ENCODE measurements at regions of chr4 and their contacts with region 1.

Region 1: GRCh38 chr4:53840643-53841042 is 223.8 kb downstream of the CHIC2 start:
- DNase-seq: peak; percentile 40
- ATAC-seq: no peak
- H3K4me3 ChIP-seq: no peak overlapping the region
- H3K27ac ChIP-seq: no peak overlapping the region
- H3K4me1 ChIP-seq: no peaks in the 10 kb centered on the region
- H3K27me3 ChIP-seq: no peaks in the 10 kb centered on the region
- CTCF ChIP-seq: no peak

Region 2: GRCh38 chr4:53605783-53606182 is 234.9 kb before region 1 on chr4:
- CTCF ChIA-PET with region 1: no interaction called
- POLR2A ChIA-PET with region 1: no interaction called
- intact Hi-C with region 1: no loop called
- DNase-seq: no peak
- ATAC-seq: no peak
- H3K4me3 ChIP-seq: no peak overlapping the region
- H3K27ac ChIP-seq: no peak overlapping the region
- H3K4me1 ChIP-seq: peaks cover 4% of the 10 kb centered on the region; the same call in 1 of the 2 replicates
- H3K27me3 ChIP-seq: no peaks in the 10 kb centered on the region
- CTCF ChIP-seq: no peak

Region 3: DNA sequence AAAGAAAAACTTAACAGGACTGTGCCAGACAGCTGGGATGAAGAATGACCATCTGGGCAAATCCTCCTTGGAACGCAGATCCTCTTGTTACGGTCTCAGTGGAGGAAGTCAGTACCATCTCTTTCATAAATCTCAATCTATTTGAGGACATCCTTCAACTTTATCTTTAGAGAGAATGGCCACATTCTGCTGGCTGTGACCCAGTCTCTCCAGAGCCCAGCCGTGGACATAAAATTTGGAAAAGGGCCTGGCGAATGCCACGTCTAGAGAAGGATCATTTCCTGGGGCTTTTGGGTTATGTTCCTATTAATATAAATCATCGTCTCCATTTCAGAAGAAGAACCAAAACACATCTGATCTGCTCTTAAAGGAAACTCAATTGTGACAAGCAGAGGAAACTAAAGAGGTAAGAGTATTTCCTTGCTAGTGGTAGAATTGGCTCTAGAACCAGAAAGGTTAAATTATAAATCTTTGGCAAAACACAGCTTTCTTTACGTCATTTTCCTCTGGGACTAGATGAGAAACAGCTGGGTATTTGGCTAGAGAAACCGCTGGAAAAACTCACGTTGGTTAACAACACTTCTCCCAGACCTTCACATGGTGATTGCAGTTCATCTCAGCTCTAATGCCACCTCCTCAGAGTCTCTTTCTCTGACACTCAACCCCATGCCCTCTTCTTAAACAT is 59.1 kb after region 1 on chr4:
- CTCF ChIA-PET with region 1: no interaction called
- POLR2A ChIA-PET with region 1: no interaction called
- intact Hi-C with region 1: loop called (anchors 10 kb)
- DNase-seq: no peak
- ATAC-seq: no peak
- H3K4me3 ChIP-seq: no peak overlapping the region
- H3K27ac ChIP-seq: no peak overlapping the region
- H3K4me1 ChIP-seq: no peaks in the 10 kb centered on the region
- H3K27me3 ChIP-seq: no peaks in the 10 kb centered on the region
- CTCF ChIP-seq: no peak

Measured in PC-3 (cell line).